ENCODE measurements at regions of chr10 and their contacts with region 1.

Region 1: GRCh38 chr10:102467971-102468438 is 16.7 kb upstream of the C10orf95 start:
- DNase-seq: no peak
- H3K4me3 ChIP-seq: no peak overlapping the region
- H3K27ac ChIP-seq: no peak overlapping the region
- H3K27me3 ChIP-seq: peaks cover 5% of the 10 kb centered on the region
- CTCF ChIP-seq: no peak

Region 2: DNA sequence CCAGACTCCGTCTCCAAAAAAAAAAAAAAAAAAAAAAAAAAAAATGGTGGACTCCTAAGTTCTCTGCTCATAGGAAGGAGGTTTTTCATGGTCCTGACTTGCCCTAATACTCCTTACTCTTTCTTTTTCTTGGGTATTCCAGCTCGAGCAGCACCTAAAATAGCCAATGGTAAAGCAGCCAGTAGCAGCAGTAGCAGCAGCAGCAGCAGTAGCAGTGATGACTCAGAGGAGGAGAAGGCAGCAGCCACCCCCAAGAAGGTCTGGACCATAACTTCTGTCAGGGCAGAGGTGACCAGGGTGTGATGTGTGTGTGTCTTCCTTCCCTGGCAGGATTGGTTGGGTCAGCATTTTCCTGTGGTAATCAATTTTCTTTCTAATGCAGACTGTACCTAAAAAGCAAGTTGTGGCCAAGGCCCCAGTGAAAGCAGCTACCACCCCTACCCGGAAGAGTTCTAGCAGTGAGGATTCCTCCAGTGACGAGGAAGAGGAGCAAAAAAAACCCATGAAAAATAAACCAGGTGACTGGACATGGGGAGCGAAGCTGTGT is 308.9 kb before region 1 on chr10:
- CTCF ChIA-PET with region 1: no interaction called
- POLR2A ChIA-PET with region 1: interaction called, 12 read pairs
- DNase-seq: no peak
- H3K4me3 ChIP-seq: no peak overlapping the region
- H3K27ac ChIP-seq: no peak overlapping the region
- H3K27me3 ChIP-seq: no peaks in the 10 kb centered on the region
- CTCF ChIP-seq: no peak

Region 3: DNA sequence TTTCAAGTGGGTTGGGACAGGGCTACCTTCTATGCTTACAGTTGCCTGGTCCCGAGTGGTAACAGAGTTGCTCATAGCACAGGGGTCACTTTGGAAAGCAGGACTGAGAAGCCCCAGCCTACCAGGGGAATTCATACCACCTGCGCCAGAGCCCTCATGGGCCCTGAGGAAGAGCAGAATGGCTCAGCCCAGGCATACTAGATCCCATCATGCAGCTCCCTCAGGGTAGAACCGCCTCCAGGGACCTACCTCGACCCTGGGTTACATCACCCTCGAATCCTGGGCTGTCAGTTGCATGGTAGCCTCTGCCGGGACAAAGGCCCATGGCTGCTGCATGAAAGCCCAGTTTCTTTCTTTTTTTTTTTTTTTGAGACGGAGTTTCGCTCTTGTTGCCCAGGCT is 38.5 kb before region 1 on chr10:
- CTCF ChIA-PET with region 1: no interaction called
- POLR2A ChIA-PET with region 1: no interaction called
- DNase-seq: no peak
- H3K4me3 ChIP-seq: no peak overlapping the region
- H3K27ac ChIP-seq: no peak overlapping the region
- H3K27me3 ChIP-seq: no peaks in the 10 kb centered on the region
- CTCF ChIP-seq: no peak